Left cardiac atrium (tissue), 4 donors: ENCODE measurements at regions of chr15 and their contacts with region 1.

Region 1: GRCh38 chr15:84035399-84035766 is 200.2 kb upstream of the GOLGA6L4 start:
- DNase-seq: no peak
- ATAC-seq: peak in 1 of 2 donors; percentile 76

Region 2: GRCh38 chr15:83571820-83572707 is 463.3 kb before region 1 on chr15:
- intact Hi-C with region 1: loop called (anchors 10 kb)
- DNase-seq: no peak
- ATAC-seq: no peak

Region 3: DNA sequence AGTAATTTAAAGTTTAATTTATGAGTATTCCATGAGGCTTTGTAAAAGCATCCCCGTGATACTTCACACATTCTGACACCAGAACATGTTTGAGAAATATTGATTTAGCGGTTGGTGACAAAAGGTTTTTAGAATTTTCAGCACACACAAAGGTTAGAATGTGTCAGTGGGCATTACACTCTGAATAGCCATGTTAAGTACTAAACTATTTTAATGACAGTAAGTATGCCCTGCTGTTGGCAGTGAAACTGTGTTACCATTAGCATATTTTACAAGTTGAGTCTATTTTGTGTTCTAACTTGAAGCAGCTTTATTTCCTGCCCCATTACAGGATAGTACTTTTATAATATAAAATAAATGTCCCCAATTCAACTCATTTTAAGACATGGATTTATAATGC is 314.9 kb before region 1 on chr15:
- intact Hi-C with region 1: no loop called
- DNase-seq: no peak
- ATAC-seq: peak in 1 of 2 donors; percentile 38

Region 4: GRCh38 chr15:83919319-83919830 is 116.0 kb before region 1 on chr15:
- intact Hi-C with region 1: no loop called
- DNase-seq: no peak
- ATAC-seq: no peak

Region 5: DNA sequence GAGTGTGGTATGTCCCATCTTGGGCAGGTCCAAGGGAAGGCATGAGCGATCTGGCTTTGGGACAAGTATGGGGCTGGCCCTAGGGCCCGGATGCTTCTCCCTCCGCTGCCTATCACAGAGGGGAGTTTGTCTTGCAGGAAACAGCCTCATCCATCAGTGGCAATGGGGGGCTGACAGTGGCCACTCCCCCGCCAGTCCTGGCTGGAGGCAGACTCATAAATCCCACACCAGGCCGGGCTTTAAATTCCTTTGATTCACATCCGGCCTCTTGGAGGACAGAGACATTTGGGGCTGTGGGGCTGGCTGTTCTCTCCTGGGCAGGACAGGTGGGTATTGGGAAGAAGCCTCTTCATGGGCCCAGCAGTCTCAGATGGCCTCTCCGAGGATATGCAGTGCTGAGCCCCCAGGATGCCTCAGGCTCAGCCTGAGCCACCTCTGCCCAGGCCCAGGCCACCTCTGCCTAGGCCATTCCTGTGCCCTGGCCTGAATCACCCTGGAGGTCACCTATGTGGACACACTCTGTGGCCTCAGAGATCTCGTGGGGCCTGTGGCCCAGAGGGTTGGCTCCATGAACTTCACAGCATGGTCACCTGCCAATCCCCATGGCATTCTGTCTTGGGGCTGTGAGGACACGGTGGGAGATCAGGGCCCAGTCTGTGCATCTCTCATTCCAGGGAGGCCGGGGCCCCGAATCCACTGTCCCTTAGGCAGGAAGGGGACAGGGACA is 116.0 kb after region 1 on chr15:
- intact Hi-C with region 1: no loop called
- DNase-seq: no peak
- ATAC-seq: no peak